B cell (primary cell): ENCODE measurements at regions of chr14 and their contacts with region 1.

Region 1: DNA sequence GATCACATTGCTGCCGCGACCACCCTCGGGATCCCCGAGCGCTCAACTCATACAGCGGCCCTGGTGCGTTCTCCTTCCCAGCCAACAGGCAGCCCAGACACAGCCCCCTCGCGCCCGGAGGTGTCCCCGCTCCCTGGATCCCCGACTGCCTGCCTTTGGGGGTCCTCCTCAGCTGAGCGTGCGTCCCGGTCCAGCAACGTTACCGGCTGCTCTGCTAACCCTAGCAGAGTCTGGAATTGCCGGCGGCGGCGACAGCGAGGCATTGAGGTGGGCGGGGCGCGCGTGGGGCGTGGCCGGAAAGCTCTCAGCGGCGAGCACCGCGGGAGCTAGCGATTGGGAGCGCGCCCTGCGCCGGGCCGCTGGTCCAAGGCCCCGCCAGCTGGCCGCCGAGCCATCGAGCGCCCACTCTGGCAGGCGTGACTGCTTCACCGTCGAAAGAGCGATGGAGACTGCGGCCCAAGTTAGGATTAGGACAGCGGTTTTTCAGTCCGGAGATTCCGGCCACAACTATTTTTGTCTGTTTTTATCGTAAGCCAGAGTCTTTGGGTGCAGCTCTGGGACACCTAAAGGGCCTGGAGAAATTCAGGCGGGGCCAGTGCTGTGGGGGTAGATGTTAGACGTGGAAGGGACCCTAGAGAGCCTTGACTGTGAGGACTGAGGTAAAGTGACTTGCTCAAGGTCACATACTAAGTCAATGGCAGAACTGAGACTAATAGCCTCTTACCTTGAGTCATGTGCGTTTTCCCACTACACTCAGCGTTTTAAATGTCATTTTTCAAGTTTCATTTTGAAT is at the start of gene HEATR5A:
- DNase-seq: peak; percentile 95
- ATAC-seq: peak; percentile 97
- H3K4me3 ChIP-seq: peak within 1 kb of the TSS; percentile 62 to 100 (median 95)
- H3K4me3 Mint-ChIP-seq: peak within 1 kb of the TSS; percentile 96
- H3K27ac ChIP-seq: peak within 1 kb of the TSS; percentile 30 to 75
- H3K27ac Mint-ChIP-seq: peak within 1 kb of the TSS; percentile 93
- H3K4me1 ChIP-seq: peaks cover 10 to 12% of the 10 kb centered on the region in 2 donors
- H3K4me1 Mint-ChIP-seq: peaks cover 26% of the 10 kb centered on the region
- H3K27me3 ChIP-seq: no peaks in the 10 kb centered on the region
- H3K27me3 Mint-ChIP-seq: no peaks in the 10 kb centered on the region
- CTCF ChIP-seq: peak; percentile 31
- total RNA-seq, gene HEATR5A: 19.1 and 22.1 TPM in 2 replicates

Region 2: GRCh38 chr14:30621940-30622830 is 798.3 kb before region 1 on chr14 and contains the start of gene SCFD1:
- CTCF ChIA-PET with region 1: no interaction called
- POLR2A ChIA-PET with region 1: no interaction called
- intact Hi-C with region 1: loop called (anchors 5 kb)
- DNase-seq: peak; percentile 94
- ATAC-seq: peak; percentile 98
- H3K4me3 ChIP-seq: peak within 1 kb of the TSS; percentile 78 to 98 (median 88)
- H3K4me3 Mint-ChIP-seq: peak within 1 kb of the TSS; percentile 98
- H3K27ac ChIP-seq: peak within 1 kb of the TSS; percentile 82 to 94
- H3K27ac Mint-ChIP-seq: peak within 1 kb of the TSS; percentile 98
- H3K4me1 ChIP-seq: peaks cover 14 to 28% of the 10 kb centered on the region in 2 donors
- H3K4me1 Mint-ChIP-seq: peaks cover 47% of the 10 kb centered on the region
- H3K27me3 ChIP-seq: no peaks in the 10 kb centered on the region
- H3K27me3 Mint-ChIP-seq: no peaks in the 10 kb centered on the region
- CTCF ChIP-seq: no peak
- total RNA-seq, gene SCFD1: 73.0 and 79.0 TPM in 2 replicates

Region 3: GRCh38 chr14:31360919-31361662 is 59.4 kb before region 1 on chr14:
- CTCF ChIA-PET with region 1: no interaction called
- POLR2A ChIA-PET with region 1: no interaction called
- intact Hi-C with region 1: no loop called
- DNase-seq: no peak
- ATAC-seq: no peak
- H3K4me3 ChIP-seq: no peak overlapping the region
- H3K4me3 Mint-ChIP-seq: no peak overlapping the region
- H3K27ac ChIP-seq: no peak overlapping the region
- H3K27ac Mint-ChIP-seq: no peak overlapping the region
- H3K4me1 ChIP-seq: peaks cover 3% of the 10 kb centered on the region in 2 donors
- H3K4me1 Mint-ChIP-seq: peaks cover 5% of the 10 kb centered on the region
- H3K27me3 ChIP-seq: no peaks in the 10 kb centered on the region
- H3K27me3 Mint-ChIP-seq: no peaks in the 10 kb centered on the region
- CTCF ChIP-seq: no peak

Region 4: GRCh38 chr14:31410048-31410650 is 10.4 kb before region 1 on chr14:
- CTCF ChIA-PET with region 1: interaction called, 8 read pairs
- POLR2A ChIA-PET with region 1: interaction called, 3 read pairs
- intact Hi-C with region 1: loop called (anchors 1 kb)
- DNase-seq: peak; percentile 55
- ATAC-seq: peak; percentile 63
- H3K4me3 ChIP-seq: peak overlapping the region in 4 of 5 experiments; percentile 12 to 56 (median 34)
- H3K4me3 Mint-ChIP-seq: peak overlapping the region; percentile 80
- H3K27ac ChIP-seq: peak overlapping the region; percentile 21 to 58
- H3K27ac Mint-ChIP-seq: peak overlapping the region; percentile 93
- H3K4me1 ChIP-seq: peaks cover 4 to 9% of the 10 kb centered on the region in 2 donors
- H3K4me1 Mint-ChIP-seq: peaks cover 30% of the 10 kb centered on the region
- H3K27me3 ChIP-seq: no peaks in the 10 kb centered on the region
- H3K27me3 Mint-ChIP-seq: no peaks in the 10 kb centered on the region
- CTCF ChIP-seq: no peak

Region 5: DNA sequence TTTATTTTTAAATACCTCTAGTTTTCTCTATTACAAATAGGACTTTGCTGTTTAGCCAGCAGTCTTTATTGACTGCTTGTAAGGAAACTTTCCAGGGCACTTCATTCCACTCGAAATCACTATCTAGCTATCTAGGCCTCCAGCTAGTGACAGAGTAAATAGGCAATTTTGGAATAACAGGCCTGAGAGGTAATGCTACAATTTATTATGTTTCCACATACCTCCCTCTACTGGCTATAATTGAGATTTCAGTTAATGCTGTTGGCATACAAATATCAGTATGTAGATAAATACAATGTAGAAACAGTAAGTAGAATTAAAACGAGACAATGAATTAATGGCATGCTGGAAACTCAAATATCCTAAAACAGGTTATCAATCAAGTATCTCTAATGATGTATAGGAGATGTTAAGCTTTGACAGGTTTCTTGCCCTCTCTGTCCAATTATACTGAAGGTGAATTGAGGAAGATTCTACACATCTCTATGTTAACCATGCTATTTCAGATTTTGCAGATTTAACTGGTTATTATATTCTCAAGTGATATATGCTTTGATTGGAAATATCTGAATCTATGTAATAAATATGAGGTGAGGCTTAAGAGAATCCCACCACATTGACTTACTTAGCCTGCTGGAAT is 29.6 kb after region 1 on chr14:
- CTCF ChIA-PET with region 1: interaction called, 17 read pairs
- POLR2A ChIA-PET with region 1: interaction called, 3 read pairs
- intact Hi-C with region 1: no loop called
- DNase-seq: peak; percentile 37
- ATAC-seq: peak; percentile 47
- H3K4me3 ChIP-seq: no peak overlapping the region
- H3K4me3 Mint-ChIP-seq: no peak overlapping the region
- H3K27ac ChIP-seq: no peak overlapping the region
- H3K27ac Mint-ChIP-seq: no peak overlapping the region
- H3K4me1 ChIP-seq: no peaks in the 10 kb centered on the region
- H3K4me1 Mint-ChIP-seq: peaks cover 2% of the 10 kb centered on the region
- H3K27me3 ChIP-seq: no peaks in the 10 kb centered on the region
- H3K27me3 Mint-ChIP-seq: no peaks in the 10 kb centered on the region
- CTCF ChIP-seq: peak; percentile 73

Region 6: DNA sequence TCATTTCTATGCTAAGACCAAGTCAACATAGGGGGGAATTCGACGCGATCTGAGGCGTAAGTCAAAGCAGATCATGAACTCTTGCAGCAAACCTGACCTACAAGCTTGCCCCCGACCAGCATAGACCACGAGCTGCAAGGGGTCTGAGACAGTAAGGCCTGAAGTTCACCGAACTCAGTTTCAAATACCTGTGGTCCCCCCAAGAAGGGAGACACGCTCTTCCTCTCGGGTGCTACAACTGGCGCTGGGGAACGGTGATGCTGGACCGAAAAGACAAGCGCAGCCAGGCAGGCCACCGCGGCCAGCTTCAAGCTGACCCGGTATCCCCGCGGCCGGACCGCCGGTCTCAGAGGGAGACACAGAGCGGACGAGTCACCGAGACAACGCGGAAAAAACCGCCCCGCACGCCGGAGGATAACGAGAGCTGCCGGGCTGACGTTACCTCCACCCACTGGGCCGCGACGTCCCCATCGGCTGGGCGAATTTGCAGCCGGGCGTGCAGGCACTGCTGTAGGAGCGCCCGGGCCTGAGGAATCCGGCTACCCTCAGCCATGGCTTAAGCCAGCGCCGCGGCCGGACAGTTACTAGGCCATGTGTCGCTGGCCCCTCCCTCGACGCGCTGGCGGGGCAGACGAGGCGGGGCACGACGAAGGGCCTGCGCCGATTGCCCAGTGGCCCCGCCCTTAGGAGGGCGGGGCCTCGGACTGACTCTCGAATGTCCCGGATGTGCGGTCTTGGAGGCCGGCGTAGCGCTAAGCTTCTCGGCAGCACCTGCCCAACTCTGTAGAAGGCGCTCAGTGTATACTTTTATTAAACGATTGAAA is 36.5 kb after region 1 on chr14 and contains the start of gene DTD2:
- CTCF ChIA-PET with region 1: interaction called, 10 read pairs
- POLR2A ChIA-PET with region 1: interaction called, 20 read pairs
- intact Hi-C with region 1: loop called (anchors 1 kb)
- DNase-seq: peak; percentile 95
- ATAC-seq: peak; percentile 99
- H3K4me3 ChIP-seq: peak within 1 kb of the TSS; percentile 63 to 87 (median 71)
- H3K4me3 Mint-ChIP-seq: peak within 1 kb of the TSS; percentile 98
- H3K27ac ChIP-seq: peak within 1 kb of the TSS; percentile 72 to 82
- H3K27ac Mint-ChIP-seq: peak within 1 kb of the TSS; percentile 93
- H3K4me1 ChIP-seq: peaks cover 8 to 13% of the 10 kb centered on the region in 2 donors
- H3K4me1 Mint-ChIP-seq: peaks cover 32% of the 10 kb centered on the region
- H3K27me3 ChIP-seq: no peaks in the 10 kb centered on the region
- H3K27me3 Mint-ChIP-seq: no peaks in the 10 kb centered on the region
- CTCF ChIP-seq: no peak
- total RNA-seq, gene DTD2: 12.5 and 14.1 TPM in 2 replicates

Region 7: DNA sequence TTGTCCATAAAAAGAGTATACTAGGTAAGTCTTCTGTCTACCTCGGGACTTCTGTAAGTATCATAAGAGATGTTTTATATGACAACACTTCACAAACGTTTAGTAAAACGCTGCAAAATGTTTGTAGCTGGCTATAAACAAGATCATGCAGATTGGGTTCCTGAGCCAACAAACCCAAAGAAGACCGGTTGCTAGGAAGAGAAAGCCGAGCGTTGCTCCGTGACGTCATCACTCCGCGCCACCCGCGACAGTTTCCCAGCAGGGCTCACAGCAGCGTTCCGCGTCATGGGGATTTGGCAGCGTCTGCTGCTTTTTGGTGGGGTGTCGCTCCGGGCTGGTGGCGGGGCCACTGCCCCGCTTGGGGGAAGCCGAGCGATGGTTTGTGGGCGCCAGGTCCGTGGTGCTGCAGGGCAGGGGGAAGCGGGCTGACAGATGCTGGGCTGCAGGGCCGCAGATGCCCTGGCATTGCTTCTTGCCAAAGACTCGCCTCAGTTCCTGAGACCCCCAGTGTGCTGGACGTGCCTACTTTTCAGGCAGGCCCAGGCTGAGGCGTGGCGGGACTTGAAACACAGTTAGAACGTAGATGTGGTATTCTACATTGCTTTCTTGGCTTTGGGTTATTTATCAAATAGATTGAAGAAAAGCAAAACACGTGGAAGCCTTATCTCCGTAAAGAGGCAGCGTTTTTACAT is 140.8 kb after region 1 on chr14 and contains the start of gene NUBPL:
- CTCF ChIA-PET with region 1: no interaction called
- POLR2A ChIA-PET with region 1: interaction called, 3 read pairs
- intact Hi-C with region 1: loop called (anchors 1 kb)
- DNase-seq: peak; percentile 98
- ATAC-seq: peak; percentile 96
- H3K4me3 ChIP-seq: peak within 1 kb of the TSS; percentile 67 to 92 (median 84)
- H3K4me3 Mint-ChIP-seq: peak within 1 kb of the TSS; percentile 93
- H3K27ac ChIP-seq: peak within 1 kb of the TSS; percentile 62 to 94
- H3K27ac Mint-ChIP-seq: peak within 1 kb of the TSS; percentile 97
- H3K4me1 ChIP-seq: peaks cover 16 to 17% of the 10 kb centered on the region in 2 donors
- H3K4me1 Mint-ChIP-seq: peaks cover 25% of the 10 kb centered on the region
- H3K27me3 ChIP-seq: peaks cover 0 to 8% (median 3%) of the 10 kb centered on the region in 4 experiments
- H3K27me3 Mint-ChIP-seq: peaks cover 7% of the 10 kb centered on the region
- CTCF ChIP-seq: no peak
- total RNA-seq, gene NUBPL: 14.2 and 15.5 TPM in 2 replicates